ENCODE measurements at regions of chr1 and their contacts with region 1.

Region 1: DNA sequence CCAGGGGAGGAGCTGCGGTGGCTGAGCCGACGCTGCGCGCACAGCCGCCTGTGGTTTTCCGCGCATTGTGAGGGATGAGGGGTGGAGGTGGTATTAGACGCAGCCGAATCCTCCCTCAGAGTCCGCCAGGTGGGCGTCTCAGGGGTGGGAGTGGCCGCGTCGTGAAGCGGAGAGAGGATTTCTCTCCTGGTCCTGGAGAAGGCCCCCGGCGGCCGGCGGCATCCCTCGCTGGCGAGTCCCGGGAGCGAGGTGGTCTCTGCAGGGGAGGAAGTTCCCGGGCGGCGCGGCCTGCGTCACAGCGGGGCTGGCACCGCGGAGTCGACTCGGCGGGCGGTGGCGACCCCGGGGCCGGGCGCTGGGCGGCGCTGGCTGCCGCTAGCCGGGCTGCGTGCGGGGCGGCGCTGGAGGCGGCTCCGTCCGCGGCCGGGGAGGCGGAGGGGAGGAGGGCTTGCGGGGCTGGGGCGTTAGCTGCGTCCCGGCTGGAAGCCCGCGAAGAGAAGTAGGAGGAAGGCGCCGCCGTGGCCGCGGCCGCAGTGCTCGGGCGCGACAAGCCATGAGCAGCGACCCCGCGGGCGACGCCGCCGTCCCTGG is at the start of gene LRRC8C:
- DNase-seq: peak; percentile 86 to 96 (median 92)
- ATAC-seq: peak; percentile 89
- H3K4me3 ChIP-seq: peak within 1 kb of the TSS; percentile 74
- H3K4me3 Mint-ChIP-seq: peak within 1 kb of the TSS; percentile 92 to 99 (median 98)
- H3K27ac ChIP-seq: peak within 1 kb of the TSS; percentile 93
- H3K27ac Mint-ChIP-seq: peak within 1 kb of the TSS; percentile 93 to 99 (median 98)
- H3K4me1 ChIP-seq: peaks cover 53 to 65% of the 10 kb centered on the region in 2 donors
- H3K4me1 Mint-ChIP-seq: peaks cover 61 to 85% (median 81%) of the 10 kb centered on the region in 7 donors
- H3K27me3 ChIP-seq: no peaks in the 10 kb centered on the region
- H3K27me3 Mint-ChIP-seq: no peaks in the 10 kb centered on the region
- total RNA-seq, gene LRRC8C: 27.1 to 50.5 (median 46.6) TPM

Region 2: GRCh38 chr1:88891318-88891950 is 741.3 kb before region 1 on chr1 and contains the start of gene GTF2B:
- CTCF ChIA-PET with region 1: no interaction called
- POLR2A ChIA-PET with region 1: no interaction called
- intact Hi-C with region 1: loop called in 1 of 2 experiments (anchors 1 kb)
- DNase-seq: peak; percentile 86 to 96 (median 94)
- ATAC-seq: peak; percentile 97
- H3K4me3 ChIP-seq: peak within 1 kb of the TSS; percentile 86
- H3K4me3 Mint-ChIP-seq: peak within 1 kb of the TSS; percentile 87 to 99 (median 95)
- H3K27ac ChIP-seq: peak within 1 kb of the TSS; percentile 91
- H3K27ac Mint-ChIP-seq: peak within 1 kb of the TSS; percentile 93 to 98 (median 97)
- H3K4me1 ChIP-seq: peaks cover 26 to 27% of the 10 kb centered on the region in 2 donors
- H3K4me1 Mint-ChIP-seq: peaks cover 23 to 59% (median 48%) of the 10 kb centered on the region in 7 donors
- H3K27me3 ChIP-seq: no peaks in the 10 kb centered on the region
- H3K27me3 Mint-ChIP-seq: peaks cover 0 to 2% (median 0%) of the 10 kb centered on the region in 5 donors
- total RNA-seq, gene GTF2B: 41.3 to 53.6 (median 47.3) TPM

Region 3: DNA sequence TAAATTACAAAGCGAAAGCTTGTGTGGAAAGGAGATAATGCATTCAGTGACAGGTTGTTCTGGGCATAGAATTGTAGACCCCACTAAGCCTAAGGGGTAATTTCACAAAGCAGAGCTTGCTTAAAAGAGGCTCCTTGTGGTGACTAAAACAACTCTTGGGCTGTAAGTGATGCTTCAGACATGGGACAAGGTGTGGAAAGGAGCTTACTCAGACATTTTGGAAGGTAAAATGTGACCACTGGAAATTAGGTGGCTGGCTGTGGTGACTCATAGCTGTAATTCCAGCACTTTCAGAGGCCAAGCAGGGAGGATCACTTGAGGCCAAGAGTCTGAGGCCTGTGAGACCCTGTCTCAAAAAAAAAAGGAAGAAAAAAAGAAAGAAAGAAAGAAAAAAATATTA is 50.9 kb before region 1 on chr1:
- CTCF ChIA-PET with region 1: interaction called, 25 read pairs
- POLR2A ChIA-PET with region 1: interaction called, 20 read pairs
- intact Hi-C with region 1: loop called in 1 of 2 experiments (anchors 2 kb)
- DNase-seq: no peak
- ATAC-seq: no peak
- H3K4me3 ChIP-seq: no peak overlapping the region
- H3K4me3 Mint-ChIP-seq: no peak overlapping the region
- H3K27ac ChIP-seq: no peak overlapping the region
- H3K27ac Mint-ChIP-seq: peak overlapping the region in 4 of 9 donors; percentile 5 to 61 (median 48)
- H3K4me1 ChIP-seq: no peaks in the 10 kb centered on the region
- H3K4me1 Mint-ChIP-seq: peaks cover 6 to 42% (median 27%) of the 10 kb centered on the region in 7 donors
- H3K27me3 ChIP-seq: no peaks in the 10 kb centered on the region
- H3K27me3 Mint-ChIP-seq: no peaks in the 10 kb centered on the region

Region 4: GRCh38 chr1:89649783-89650182 is 17.0 kb after region 1 on chr1:
- CTCF ChIA-PET with region 1: interaction called, 3 read pairs
- POLR2A ChIA-PET with region 1: interaction called, 38 read pairs
- intact Hi-C with region 1: loop called (anchors 2 kb)
- DNase-seq: no peak
- ATAC-seq: no peak
- H3K4me3 ChIP-seq: no peak overlapping the region
- H3K4me3 Mint-ChIP-seq: peak overlapping the region; percentile 1 to 63 (median 48)
- H3K27ac ChIP-seq: no peak overlapping the region
- H3K27ac Mint-ChIP-seq: peak overlapping the region; percentile 2 to 92 (median 68)
- H3K4me1 ChIP-seq: peaks cover 36 to 52% of the 10 kb centered on the region in 2 donors
- H3K4me1 Mint-ChIP-seq: peaks cover 38 to 78% (median 72%) of the 10 kb centered on the region in 7 donors
- H3K27me3 ChIP-seq: no peaks in the 10 kb centered on the region
- H3K27me3 Mint-ChIP-seq: no peaks in the 10 kb centered on the region

Region 5: DNA sequence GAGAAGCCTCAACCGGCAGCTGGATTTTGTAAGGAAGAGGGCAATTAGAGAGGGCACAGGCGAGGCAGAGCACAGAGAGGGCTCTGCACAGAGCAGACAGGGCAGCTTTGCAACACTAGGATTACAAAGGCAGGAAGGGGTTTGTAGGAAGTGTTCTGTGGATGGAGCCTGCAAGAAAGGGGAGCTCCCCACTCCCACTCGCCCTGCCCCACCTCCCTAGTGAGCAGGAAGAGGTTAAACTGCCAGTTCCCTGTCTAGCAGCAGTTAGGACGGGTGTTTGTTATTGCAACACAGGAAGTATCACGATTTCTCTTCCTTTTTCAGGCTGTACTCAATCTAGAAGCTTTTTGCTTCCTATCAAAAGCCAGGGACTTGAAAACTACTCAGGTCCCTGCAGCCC is 124.8 kb after region 1 on chr1:
- CTCF ChIA-PET with region 1: interaction called, 122 read pairs
- POLR2A ChIA-PET with region 1: interaction called, 101 read pairs
- intact Hi-C with region 1: loop called in 1 of 2 experiments (anchors 1 kb)
- DNase-seq: peak in 8 of 9 donors; percentile 30 to 59 (median 51)
- ATAC-seq: peak; percentile 68
- H3K4me3 ChIP-seq: peak overlapping the region; percentile 48
- H3K4me3 Mint-ChIP-seq: peak overlapping the region; percentile 73 to 87 (median 83)
- H3K27ac ChIP-seq: peak overlapping the region; percentile 62
- H3K27ac Mint-ChIP-seq: peak overlapping the region; percentile 88 to 97 (median 95)
- H3K4me1 ChIP-seq: peaks cover 37 to 81% of the 10 kb centered on the region in 2 donors
- H3K4me1 Mint-ChIP-seq: peaks cover 61 to 97% (median 88%) of the 10 kb centered on the region in 7 donors
- H3K27me3 ChIP-seq: no peaks in the 10 kb centered on the region
- H3K27me3 Mint-ChIP-seq: no peaks in the 10 kb centered on the region

Region 6: GRCh38 chr1:89987170-89987819 is 354.5 kb after region 1 on chr1:
- CTCF ChIA-PET with region 1: no interaction called
- POLR2A ChIA-PET with region 1: no interaction called
- intact Hi-C with region 1: loop called (anchors 1 to 2 kb)
- DNase-seq: peak in 8 of 9 donors; percentile 48 to 76 (median 70)
- ATAC-seq: peak; percentile 97
- H3K4me3 ChIP-seq: no peak overlapping the region
- H3K4me3 Mint-ChIP-seq: no peak overlapping the region
- H3K27ac ChIP-seq: no peak overlapping the region
- H3K27ac Mint-ChIP-seq: no peak overlapping the region
- H3K4me1 ChIP-seq: no peaks in the 10 kb centered on the region
- H3K4me1 Mint-ChIP-seq: no peaks in the 10 kb centered on the region
- H3K27me3 ChIP-seq: no peaks in the 10 kb centered on the region
- H3K27me3 Mint-ChIP-seq: peaks cover 0 to 13% (median 4%) of the 10 kb centered on the region in 5 donors